ENCODE measurements at regions of chr9 and their contacts with region 1.

Region 1: GRCh38 chr9:132406554-132407122 is at the start of gene TTF1:
- DNase-seq: peak; percentile 84 to 97 (median 94)
- ATAC-seq: peak; percentile 79
- H3K4me3 ChIP-seq: peak within 1 kb of the TSS; percentile 65 to 76
- H3K4me3 Mint-ChIP-seq: peak within 1 kb of the TSS; percentile 93
- H3K27ac ChIP-seq: peak within 1 kb of the TSS; percentile 42 to 56
- H3K27ac Mint-ChIP-seq: peak within 1 kb of the TSS; percentile 91
- H3K4me1 ChIP-seq: peaks cover 56% of the 10 kb centered on the region
- H3K4me1 Mint-ChIP-seq: peaks cover 58% of the 10 kb centered on the region
- H3K27me3 ChIP-seq: peaks cover 10 to 12% of the 10 kb centered on the region in 2 experiments
- H3K27me3 Mint-ChIP-seq: peaks cover 11% of the 10 kb centered on the region
- CTCF ChIP-seq: no peak
- total RNA-seq, gene TTF1: 14.5 to 15.0 TPM

Region 2: DNA sequence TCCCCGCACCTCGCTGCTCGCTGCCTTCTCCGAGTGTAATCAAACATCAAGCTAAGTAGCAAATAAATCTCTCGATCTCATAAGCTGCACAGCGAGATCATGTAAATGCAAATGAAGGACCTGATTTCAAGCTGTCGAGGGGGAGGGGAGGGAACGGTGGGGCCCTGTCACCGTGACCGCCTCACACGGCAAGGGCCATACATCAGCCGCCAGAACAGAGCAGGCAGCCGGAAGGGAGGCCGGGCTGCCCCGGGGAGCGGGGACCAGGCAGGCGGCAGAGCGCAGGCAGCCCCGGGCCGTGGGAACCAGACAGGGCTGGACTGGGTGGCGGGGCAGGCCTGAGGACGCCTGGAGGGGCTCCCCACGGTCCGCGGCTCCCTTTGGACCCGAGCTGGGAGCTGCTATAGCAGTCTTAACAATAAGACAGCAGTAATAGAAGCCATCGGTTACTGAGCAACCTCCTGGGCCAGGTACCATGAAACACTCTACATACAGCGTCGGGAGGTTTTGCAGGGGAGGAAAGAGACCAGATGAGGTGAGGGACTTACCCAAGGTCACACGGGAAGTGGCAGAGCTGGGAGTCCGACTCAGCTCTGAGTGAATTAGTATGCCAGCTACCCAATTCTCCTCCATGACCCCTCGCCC is 80.2 kb after region 1 on chr9:
- CTCF ChIA-PET with region 1: interaction called, 3 read pairs
- POLR2A ChIA-PET with region 1: no interaction called
- intact Hi-C with region 1: loop called in 1 of 2 experiments (anchors 5 kb)
- DNase-seq: peak; percentile 10 to 90 (median 41)
- ATAC-seq: peak; percentile 68
- H3K4me3 ChIP-seq: peak overlapping the region; percentile 17 to 26
- H3K4me3 Mint-ChIP-seq: peak overlapping the region; percentile 61
- H3K27ac ChIP-seq: peak overlapping the region in 1 of 2 experiments; percentile 42
- H3K27ac Mint-ChIP-seq: peak overlapping the region; percentile 83
- H3K4me1 ChIP-seq: peaks cover 29% of the 10 kb centered on the region
- H3K4me1 Mint-ChIP-seq: peaks cover 26% of the 10 kb centered on the region
- H3K27me3 ChIP-seq: peaks cover 8 to 11% of the 10 kb centered on the region in 2 experiments
- H3K27me3 Mint-ChIP-seq: peaks cover 35% of the 10 kb centered on the region
- CTCF ChIP-seq: no peak

Region 3: DNA sequence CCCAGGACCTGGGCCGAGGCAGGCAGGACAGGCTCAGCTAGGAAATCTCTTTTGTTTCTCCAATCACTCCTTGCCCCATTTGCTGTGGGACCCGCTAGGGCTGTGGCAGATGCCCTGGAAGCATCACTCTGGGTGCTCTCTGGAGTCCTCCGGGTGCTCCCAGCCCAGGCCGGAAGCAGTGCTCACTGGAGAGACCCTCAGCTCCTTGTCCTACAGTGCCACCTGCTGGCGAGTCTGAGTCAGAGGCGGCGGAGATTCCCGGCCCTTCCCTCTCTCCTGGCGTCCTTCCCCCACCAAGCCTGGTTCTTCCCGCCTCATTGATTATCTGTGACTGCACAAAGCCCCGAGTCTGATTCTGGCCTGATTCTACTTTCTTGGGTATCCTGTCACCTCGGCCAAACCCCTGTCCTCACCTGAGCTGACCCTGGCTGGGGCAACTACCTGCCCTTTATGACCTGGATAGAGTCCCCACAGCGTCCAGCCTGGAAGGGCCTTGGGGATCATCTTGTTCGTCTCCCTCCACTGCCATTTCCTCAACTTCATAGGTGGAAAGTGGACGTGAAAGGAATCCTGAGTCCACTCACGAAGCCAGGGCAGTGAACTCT is 168.5 kb after region 1 on chr9:
- CTCF ChIA-PET with region 1: interaction called, 7 read pairs
- POLR2A ChIA-PET with region 1: no interaction called
- intact Hi-C with region 1: loop called (anchors 1 kb)
- DNase-seq: peak in 8 of 9 experiments; percentile 12 to 71 (median 50)
- ATAC-seq: peak; percentile 68
- H3K4me3 ChIP-seq: no peak overlapping the region
- H3K4me3 Mint-ChIP-seq: no peak overlapping the region
- H3K27ac ChIP-seq: no peak overlapping the region
- H3K27ac Mint-ChIP-seq: no peak overlapping the region
- H3K4me1 ChIP-seq: no peaks in the 10 kb centered on the region
- H3K4me1 Mint-ChIP-seq: peaks cover 2% of the 10 kb centered on the region
- H3K27me3 ChIP-seq: peaks cover 25 to 30% of the 10 kb centered on the region in 2 experiments
- H3K27me3 Mint-ChIP-seq: peaks cover 51% of the 10 kb centered on the region
- CTCF ChIP-seq: peak; percentile 61

Region 4: DNA sequence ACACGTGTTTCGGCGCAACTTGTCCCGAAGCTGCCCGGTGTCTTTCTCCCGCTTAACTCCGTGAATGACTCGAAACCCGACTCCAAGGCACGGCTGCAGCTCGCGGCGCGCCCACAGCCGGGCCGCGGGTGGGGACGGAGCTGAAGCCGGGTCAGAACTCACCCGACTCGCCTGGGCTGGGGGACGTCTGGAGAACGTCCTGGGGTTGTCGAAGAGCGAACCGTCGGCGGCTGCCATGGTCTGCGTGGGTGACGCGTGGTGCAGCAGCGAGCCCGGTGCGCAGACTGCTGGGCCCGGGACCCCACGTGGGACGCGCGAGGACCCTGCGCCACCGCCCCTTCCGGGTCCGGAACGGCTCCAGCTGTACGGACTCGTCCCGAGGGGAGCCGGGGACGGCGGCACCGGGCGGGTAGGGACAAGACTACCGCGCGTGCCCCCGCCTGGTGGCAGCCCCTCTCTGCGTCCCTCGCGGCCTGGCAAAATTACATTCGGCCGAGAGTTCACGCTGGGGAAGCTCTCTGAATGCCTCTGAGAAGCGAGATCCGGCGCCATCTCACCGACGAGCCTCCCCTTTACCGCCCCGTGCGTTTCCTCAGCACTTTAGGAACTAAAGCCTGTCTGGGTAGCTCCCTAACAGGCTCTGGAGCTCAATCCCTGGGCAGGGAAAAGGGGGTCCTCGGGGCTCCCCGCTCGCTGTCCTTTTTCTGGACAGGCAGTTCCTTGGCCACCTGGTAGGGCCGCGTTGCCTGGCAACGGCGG is 263.2 kb after region 1 on chr9 and contains the start of gene DDX31:
- CTCF ChIA-PET with region 1: no interaction called
- POLR2A ChIA-PET with region 1: no interaction called
- intact Hi-C with region 1: loop called (anchors 1 kb)
- DNase-seq: peak; percentile 79 to 94 (median 88)
- ATAC-seq: peak; percentile 77
- H3K4me3 ChIP-seq: peak within 1 kb of the TSS; percentile 100
- H3K4me3 Mint-ChIP-seq: peak within 1 kb of the TSS; percentile 91
- H3K27ac ChIP-seq: peak within 1 kb of the TSS; percentile 98 to 99
- H3K27ac Mint-ChIP-seq: peak within 1 kb of the TSS; percentile 97
- H3K4me1 ChIP-seq: peaks cover 22% of the 10 kb centered on the region
- H3K4me1 Mint-ChIP-seq: peaks cover 63% of the 10 kb centered on the region
- H3K27me3 ChIP-seq: no peaks in the 10 kb centered on the region
- H3K27me3 Mint-ChIP-seq: no peaks in the 10 kb centered on the region
- CTCF ChIP-seq: no peak
- total RNA-seq, gene DDX31: 14.1 to 15.6 TPM

Region 5: DNA sequence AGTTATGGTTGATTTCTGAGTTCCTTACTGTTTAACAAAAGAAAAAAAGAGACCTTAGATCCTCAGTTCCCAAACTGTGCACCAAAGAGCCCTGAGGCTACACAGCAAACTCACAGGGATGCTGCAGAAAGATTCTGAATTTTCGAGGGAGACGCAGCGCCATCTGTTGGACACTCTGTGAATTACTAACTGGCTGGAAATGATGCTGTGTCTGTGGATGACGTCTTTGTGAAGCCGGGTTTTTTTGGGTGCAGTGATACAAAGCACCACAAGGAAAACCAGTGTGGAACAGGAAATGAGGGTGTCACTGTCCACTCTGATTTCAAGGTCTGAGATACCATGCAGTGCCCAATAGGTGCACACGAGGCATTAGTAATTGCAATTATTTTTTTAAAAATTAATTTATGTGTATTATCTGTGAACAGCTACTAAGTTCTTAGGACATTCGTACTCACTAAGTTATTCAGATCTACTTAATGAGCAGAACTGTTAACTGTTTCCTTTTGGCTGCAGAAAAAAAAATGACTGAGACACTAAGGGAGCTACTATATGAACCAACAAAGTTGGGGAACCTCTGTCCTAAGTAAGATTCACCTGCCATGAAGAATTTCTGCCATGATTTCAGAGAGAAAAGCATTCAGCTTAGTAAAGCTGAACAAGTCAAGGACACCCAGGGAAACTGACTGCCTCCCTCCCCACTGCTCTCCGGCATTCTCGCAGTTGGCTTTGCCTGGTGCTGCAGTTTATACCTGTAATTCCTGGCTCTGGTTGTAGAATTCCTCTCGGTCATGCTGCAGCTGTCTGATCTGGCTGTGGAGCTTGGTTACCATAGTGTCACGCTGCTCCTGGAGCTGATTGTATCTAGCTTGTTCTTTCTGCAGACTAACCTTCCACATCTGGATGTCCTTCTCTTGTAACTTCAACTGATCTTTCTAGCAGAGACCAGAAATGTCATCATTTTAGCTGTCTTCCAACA is 495.5 kb after region 1 on chr9:
- CTCF ChIA-PET with region 1: no interaction called
- POLR2A ChIA-PET with region 1: no interaction called
- intact Hi-C with region 1: loop called (anchors 5 kb)
- DNase-seq: peak; percentile 54 to 90 (median 76)
- ATAC-seq: peak; percentile 99
- H3K4me3 ChIP-seq: no peak overlapping the region
- H3K4me3 Mint-ChIP-seq: no peak overlapping the region
- H3K27ac ChIP-seq: no peak overlapping the region
- H3K27ac Mint-ChIP-seq: peak overlapping the region; percentile 19
- H3K4me1 ChIP-seq: no peaks in the 10 kb centered on the region
- H3K4me1 Mint-ChIP-seq: peaks cover 3% of the 10 kb centered on the region
- H3K27me3 ChIP-seq: no peaks in the 10 kb centered on the region
- H3K27me3 Mint-ChIP-seq: no peaks in the 10 kb centered on the region
- CTCF ChIP-seq: peak; percentile 91

Region 6: GRCh38 chr9:132978451-132979131 is 572.0 kb after region 1 on chr9 and contains the start of gene GFI1B:
- CTCF ChIA-PET with region 1: no interaction called
- POLR2A ChIA-PET with region 1: no interaction called
- intact Hi-C with region 1: no loop called
- DNase-seq: no peak
- ATAC-seq: no peak
- H3K4me3 ChIP-seq: no peak within 1 kb of the TSS
- H3K4me3 Mint-ChIP-seq: no peak within 1 kb of the TSS
- H3K27ac ChIP-seq: no peak within 1 kb of the TSS
- H3K27ac Mint-ChIP-seq: no peak within 1 kb of the TSS
- H3K4me1 ChIP-seq: peaks cover 6% of the 10 kb centered on the region
- H3K4me1 Mint-ChIP-seq: peaks cover 9% of the 10 kb centered on the region
- H3K27me3 ChIP-seq: peaks cover 8 to 11% of the 10 kb centered on the region in 2 experiments
- H3K27me3 Mint-ChIP-seq: peaks cover 38% of the 10 kb centered on the region
- CTCF ChIP-seq: no peak
- total RNA-seq, gene GFI1B: not detected

Region 7: DNA sequence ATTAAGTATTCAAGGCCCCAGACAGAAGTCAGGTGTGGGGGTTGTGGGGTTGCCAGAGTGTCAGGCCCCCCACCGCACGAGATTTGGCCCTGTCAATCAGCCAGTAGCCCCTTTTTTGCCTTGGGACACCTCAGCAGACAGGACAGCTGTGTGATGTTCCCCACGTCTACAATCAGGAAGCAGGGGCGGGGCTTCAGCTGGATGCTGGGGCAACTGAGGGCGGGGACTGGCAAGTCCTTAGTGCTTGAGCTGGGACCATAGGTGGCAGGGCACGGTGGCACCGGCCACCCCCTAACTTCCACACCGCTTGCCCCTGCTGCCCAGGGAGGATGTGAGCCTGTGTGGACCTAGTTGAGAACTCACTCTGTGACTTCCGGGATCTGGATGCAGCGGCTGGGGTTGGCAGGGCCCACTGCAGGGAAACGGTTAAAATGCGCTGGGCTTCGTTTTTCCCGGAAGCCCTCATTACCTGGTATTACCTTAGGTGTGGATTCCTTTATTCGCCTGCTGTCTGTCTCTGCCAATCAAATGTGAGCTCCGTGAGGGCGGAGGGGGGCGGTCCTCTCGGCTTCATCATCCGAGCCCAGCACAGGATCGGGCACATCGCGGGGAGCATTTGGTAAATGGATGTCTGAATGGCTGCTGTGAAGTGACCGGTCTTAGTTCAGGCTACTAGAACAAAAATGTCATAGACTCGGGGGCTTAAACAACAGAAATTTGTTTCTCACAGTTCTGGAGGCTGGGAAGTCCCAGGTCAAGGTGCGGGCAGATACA is 616.7 kb after region 1 on chr9:
- CTCF ChIA-PET with region 1: no interaction called
- POLR2A ChIA-PET with region 1: no interaction called
- intact Hi-C with region 1: loop called in 1 of 2 experiments (anchors 2 kb)
- DNase-seq: peak in 5 of 9 experiments; percentile 19 to 53 (median 39)
- ATAC-seq: no peak
- H3K4me3 ChIP-seq: no peak overlapping the region
- H3K4me3 Mint-ChIP-seq: no peak overlapping the region
- H3K27ac ChIP-seq: no peak overlapping the region
- H3K27ac Mint-ChIP-seq: no peak overlapping the region
- H3K4me1 ChIP-seq: peaks cover 4% of the 10 kb centered on the region
- H3K4me1 Mint-ChIP-seq: peaks cover 13% of the 10 kb centered on the region
- H3K27me3 ChIP-seq: no peaks in the 10 kb centered on the region
- H3K27me3 Mint-ChIP-seq: no peaks in the 10 kb centered on the region
- CTCF ChIP-seq: no peak